Sciatic nerve (tissue), 2 donors: ENCODE measurements at regions of chr1 and their contacts with region 1.

Region 1: DNA sequence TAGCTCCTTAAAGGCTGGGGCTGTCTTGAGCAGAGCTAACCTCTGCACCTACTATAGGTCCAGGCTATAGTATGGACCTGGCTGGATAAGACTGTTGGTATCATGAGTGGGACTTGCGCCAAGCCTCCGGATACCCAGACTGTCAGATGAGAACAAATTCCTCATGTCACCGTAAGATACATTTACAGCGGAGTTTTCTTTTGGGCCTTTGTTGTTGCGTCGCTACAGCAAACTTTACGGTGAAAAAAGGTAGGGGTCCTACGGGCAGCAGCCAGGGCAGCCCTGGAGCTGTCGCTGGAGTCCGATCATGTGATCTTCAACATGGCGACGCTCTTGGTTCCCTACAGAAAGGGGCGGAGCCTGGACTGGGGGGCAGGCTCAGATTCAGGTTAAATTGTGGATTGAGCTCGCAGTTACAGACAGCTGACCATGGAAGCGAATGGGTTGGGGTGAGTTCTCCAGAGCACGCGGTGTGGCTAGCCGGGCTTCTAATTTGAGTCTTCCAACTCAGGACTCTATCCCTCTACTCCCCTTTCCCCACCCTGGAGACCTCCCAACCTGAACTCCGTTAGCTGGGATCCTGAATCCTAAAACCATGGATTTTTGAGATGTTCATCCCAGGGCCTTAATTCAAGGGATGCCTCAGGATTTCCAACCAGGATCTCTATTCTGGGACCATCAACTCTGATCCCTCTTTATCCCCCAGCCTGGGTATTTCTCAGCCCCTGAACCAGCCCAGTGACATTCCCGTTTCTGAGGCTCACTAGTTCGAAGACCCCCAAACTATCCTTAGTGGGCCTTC is at the start of gene UROD:
- DNase-seq: peak; percentile 94
- ATAC-seq: peak; percentile 96
- total RNA-seq, gene UROD: 76.1 TPM

Region 2: GRCh38 chr1:44835738-44836675 is 176.0 kb before region 1 on chr1:
- intact Hi-C with region 1: loop called (anchors 2 kb)
- DNase-seq: peak; percentile 95
- ATAC-seq: peak; percentile 73

Region 3: GRCh38 chr1:45490626-45491486 is 478.8 kb after region 1 on chr1 and contains the start of gene TESK2:
- intact Hi-C with region 1: loop called (anchors 10 kb)
- DNase-seq: peak; percentile 97
- ATAC-seq: peak; percentile 99
- total RNA-seq, gene TESK2: 14.3 TPM

Region 4: DNA sequence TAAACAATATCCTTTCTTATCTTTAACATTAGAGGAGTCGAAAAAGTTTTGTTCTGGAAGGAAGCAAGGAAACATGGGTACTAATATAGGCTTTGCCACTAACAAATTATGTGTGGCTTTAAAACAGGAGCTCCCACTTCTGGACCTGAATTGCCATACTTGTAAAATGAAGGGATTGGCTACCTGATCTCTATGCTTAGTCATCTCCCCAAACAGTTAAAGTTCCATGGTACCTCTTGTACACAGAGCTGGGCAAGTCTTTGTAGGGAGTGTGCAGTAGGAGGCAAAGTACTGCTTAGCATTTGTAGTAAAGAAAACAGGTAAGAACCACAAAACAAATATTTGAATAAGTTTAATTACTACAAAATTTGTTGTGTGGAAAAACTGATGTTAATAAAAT is 872.7 kb after region 1 on chr1:
- intact Hi-C with region 1: loop called (anchors 10 kb)
- DNase-seq: no peak
- ATAC-seq: no peak